ENCODE measurements at regions of chr14 and their contacts with region 1.

Region 1: GRCh38 chr14:19993438-19993837 is 8.5 kb upstream of the OR4Q2 start:
- DNase-seq: no peak
- ATAC-seq: no peak
- H3K4me3 ChIP-seq: no peak overlapping the region
- H3K4me3 Mint-ChIP-seq: no peak overlapping the region
- H3K27ac ChIP-seq: no peak overlapping the region
- H3K27ac Mint-ChIP-seq: no peak overlapping the region
- H3K4me1 ChIP-seq: no peaks in the 10 kb centered on the region
- H3K4me1 Mint-ChIP-seq: peaks cover 0 to 8% (median 0%) of the 10 kb centered on the region in 7 donors
- H3K27me3 ChIP-seq: no peaks in the 10 kb centered on the region
- H3K27me3 Mint-ChIP-seq: no peaks in the 10 kb centered on the region

Region 2: GRCh38 chr14:19895282-19895681 is 98.2 kb before region 1 on chr14:
- CTCF ChIA-PET with region 1: no interaction called
- POLR2A ChIA-PET with region 1: no interaction called
- intact Hi-C with region 1: loop called in 1 of 2 experiments (anchors 5 kb)
- DNase-seq: no peak
- ATAC-seq: no peak
- H3K4me3 ChIP-seq: no peak overlapping the region
- H3K4me3 Mint-ChIP-seq: no peak overlapping the region
- H3K27ac ChIP-seq: no peak overlapping the region
- H3K27ac Mint-ChIP-seq: no peak overlapping the region
- H3K4me1 ChIP-seq: no peaks in the 10 kb centered on the region
- H3K4me1 Mint-ChIP-seq: no peaks in the 10 kb centered on the region
- H3K27me3 ChIP-seq: no peaks in the 10 kb centered on the region
- H3K27me3 Mint-ChIP-seq: peaks cover 0 to 21% (median 13%) of the 10 kb centered on the region in 5 donors

Region 3: DNA sequence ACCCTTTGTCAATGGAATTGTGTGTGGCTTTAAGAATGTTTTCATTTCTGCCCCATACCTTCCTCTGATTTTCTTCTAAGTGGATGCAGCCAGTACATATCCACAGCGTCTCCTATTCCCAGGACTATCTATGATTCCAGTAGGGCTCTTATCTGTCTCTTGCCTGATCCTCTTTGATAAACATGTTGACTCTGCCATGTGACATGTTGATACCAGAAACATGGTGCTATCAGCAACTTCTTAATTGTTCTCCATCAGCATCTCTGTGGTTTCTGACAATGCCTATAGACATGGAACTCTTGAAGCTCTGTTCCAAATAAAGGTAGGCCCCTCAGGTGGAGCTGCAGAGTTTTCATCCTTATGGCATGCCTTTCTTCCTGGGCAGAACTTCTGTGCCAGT is 54.8 kb after region 1 on chr14:
- CTCF ChIA-PET with region 1: no interaction called
- POLR2A ChIA-PET with region 1: no interaction called
- intact Hi-C with region 1: no loop called
- DNase-seq: no peak
- ATAC-seq: no peak
- H3K4me3 ChIP-seq: no peak overlapping the region
- H3K4me3 Mint-ChIP-seq: no peak overlapping the region
- H3K27ac ChIP-seq: no peak overlapping the region
- H3K27ac Mint-ChIP-seq: no peak overlapping the region
- H3K4me1 ChIP-seq: no peaks in the 10 kb centered on the region
- H3K4me1 Mint-ChIP-seq: peaks cover 0 to 2% (median 0%) of the 10 kb centered on the region in 7 donors
- H3K27me3 ChIP-seq: no peaks in the 10 kb centered on the region
- H3K27me3 Mint-ChIP-seq: peaks cover 3 to 17% (median 9%) of the 10 kb centered on the region in 5 donors